HEK293T (cell line): ENCODE measurements at regions of chr6 and their contacts with region 1.

Region 1: GRCh38 chr6:90586836-90587638 is at the start of gene MAP3K7:
- DNase-seq: peak; percentile 86

Region 2: GRCh38 chr6:90604546-90604945 is 17.5 kb after region 1 on chr6:
- CTCF ChIA-PET with region 1: no interaction called
- POLR2A ChIA-PET with region 1: interaction called, 11 read pairs
- DNase-seq: no peak

Region 3: GRCh38 chr6:90610751-90611542 is 23.9 kb after region 1 on chr6:
- CTCF ChIA-PET with region 1: no interaction called
- POLR2A ChIA-PET with region 1: interaction called, 10 read pairs
- DNase-seq: peak; percentile 53

Region 4: GRCh38 chr6:90753820-90754643 is 167.0 kb after region 1 on chr6:
- CTCF ChIA-PET with region 1: no interaction called
- POLR2A ChIA-PET with region 1: no interaction called
- DNase-seq: no peak